Posterior vena cava (tissue), 2 donors: ENCODE measurements at regions of chr7 and their contacts with region 1.

Region 1: DNA sequence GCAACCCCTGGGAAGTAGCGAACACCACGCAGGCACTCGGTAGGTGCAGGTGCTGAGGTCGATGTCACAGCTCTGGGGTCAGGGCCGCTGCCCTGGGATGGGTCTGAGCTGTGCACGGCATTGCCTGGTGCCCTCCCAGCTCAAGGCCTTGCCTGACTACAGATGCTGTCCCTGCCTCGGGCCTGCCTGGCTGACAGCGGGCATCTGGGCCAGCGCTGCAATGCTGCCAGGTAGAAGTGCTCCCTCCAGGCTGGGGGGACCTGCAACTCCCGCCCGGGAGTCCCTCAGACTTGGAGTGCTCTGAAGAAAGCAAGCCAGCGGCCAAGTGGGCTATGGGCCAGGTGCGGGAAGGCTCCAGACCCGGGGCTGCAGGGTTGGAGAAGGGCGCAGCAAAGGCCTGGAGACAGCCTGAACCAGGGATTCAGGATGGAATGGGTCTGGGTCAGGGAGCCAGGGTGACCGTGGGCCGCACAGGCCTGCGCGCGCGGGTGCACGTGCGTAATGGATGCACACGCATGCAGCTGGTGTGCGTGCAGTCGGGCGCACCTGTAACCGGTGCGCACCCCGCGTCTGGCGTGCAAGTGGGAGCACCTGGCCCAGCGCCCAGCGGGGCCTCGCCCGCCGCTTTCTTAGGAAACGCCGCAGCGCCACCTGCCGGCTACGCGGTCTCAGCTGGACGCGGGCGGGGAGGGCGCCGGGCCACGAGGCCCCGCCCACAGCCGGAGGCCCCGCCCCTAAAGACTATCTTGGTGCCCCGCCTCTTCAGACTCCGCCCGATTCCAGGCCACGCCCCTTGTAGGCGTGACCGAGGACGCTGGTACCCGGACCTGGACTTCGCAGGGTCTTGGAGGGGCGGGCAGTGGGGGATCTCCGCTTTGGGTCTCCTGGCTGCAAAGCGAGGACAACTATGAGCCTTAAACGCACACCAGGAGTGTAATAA is 46.7 kb downstream of the MICALL2 start:
- DNase-seq: peak; percentile 95

Region 2: DNA sequence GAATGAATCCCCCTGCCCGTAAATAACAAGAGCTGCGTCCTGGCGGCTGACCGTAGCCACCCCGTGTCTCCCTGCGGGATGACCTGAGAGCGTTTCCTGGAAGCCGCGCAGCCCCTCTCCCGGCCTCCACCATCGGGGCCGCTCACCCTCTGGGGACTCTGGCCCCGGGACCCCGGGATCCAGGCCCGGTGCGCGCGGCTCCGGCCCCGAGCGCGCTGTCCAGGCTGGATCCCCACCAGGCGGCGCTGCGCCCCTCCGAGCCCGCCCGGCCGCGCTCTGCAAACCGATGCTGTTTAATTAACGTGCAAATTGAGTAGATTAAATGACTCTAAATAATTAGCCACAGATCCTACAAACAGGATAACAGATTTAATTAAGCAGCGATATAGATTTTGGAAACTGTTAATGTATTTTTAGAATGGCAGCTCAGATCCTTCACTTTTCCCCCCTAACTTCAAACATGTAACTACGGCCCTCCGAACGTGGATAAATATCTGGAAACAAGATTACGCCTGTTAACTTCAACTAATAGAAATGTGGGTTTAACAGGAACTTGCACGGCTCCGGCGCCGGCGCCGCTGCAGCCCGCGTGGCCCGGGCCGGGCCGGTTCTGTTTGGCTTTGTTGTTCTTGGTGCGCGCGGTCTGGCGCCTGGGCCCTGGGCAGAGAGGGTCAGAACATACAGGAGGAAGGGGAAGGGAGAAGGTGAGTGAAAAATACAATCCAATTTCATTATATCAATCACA is 187.0 kb before region 1 on chr7:
- intact Hi-C with region 1: loop called in 1 of 2 experiments (anchors 10 kb)
- DNase-seq: no peak